ENCODE measurements at regions of chr1 and their contacts with region 1.

Region 1: DNA sequence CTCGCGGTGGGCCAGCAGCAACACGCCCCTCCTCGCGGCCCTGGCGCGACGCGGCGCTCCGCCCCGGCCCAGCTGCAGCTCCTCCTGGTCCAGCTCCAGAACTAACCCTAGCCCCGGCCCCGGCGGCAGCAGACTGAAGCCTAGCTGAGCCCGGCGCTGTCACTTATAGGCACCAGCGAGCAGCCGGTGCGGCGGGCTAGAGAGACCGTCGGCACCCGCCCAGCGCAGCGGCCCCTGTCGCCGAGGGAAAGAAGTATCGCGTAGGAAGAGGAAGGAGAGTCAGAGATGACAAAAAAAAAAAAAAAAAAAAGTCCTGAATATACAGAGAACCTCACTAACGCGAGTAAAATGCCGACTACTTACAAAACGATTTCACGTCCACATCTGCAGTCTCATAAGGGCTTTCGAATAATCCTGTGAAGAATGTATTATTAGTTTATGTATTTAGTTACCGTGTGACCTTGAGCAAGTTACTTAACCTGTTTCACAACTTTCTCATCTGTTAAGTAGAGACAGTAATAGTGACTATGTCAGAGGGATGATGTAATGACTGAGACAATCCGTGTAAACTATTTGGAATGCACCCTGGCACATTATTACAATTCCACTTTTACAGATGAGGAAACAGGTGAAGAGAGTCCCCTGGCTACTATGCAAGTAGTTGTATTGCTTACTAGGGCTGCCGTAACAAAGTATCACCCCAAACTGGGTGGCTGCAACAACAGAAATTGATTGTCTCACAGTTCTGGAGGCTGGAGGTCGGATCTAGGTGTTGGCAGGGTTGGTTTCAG is at the start of gene SLC9A1:
- DNase-seq: peak; percentile 91
- ATAC-seq: peak; percentile 94
- H3K4me3 Mint-ChIP-seq: peak within 1 kb of the TSS; percentile 79
- H3K27ac Mint-ChIP-seq: peak within 1 kb of the TSS; percentile 96
- H3K4me1 Mint-ChIP-seq: peaks cover 46% of the 10 kb centered on the region
- H3K27me3 Mint-ChIP-seq: no peaks in the 10 kb centered on the region
- CTCF ChIP-seq: peak; percentile 88
- total RNA-seq, gene SLC9A1: 14.8 to 15.3 TPM

Region 2: GRCh38 chr1:27111626-27112573 is 43.3 kb before region 1 on chr1:
- CTCF ChIA-PET with region 1: interaction called, 29 read pairs
- POLR2A ChIA-PET with region 1: interaction called, 12 read pairs
- intact Hi-C with region 1: loop called (anchors 5 kb)
- DNase-seq: peak; percentile 92
- ATAC-seq: peak; percentile 97
- H3K4me3 Mint-ChIP-seq: peak overlapping the region; percentile 49
- H3K27ac Mint-ChIP-seq: peak overlapping the region; percentile 90
- H3K4me1 Mint-ChIP-seq: peaks cover 55% of the 10 kb centered on the region
- H3K27me3 Mint-ChIP-seq: no peaks in the 10 kb centered on the region
- CTCF ChIP-seq: no peak

Region 3: DNA sequence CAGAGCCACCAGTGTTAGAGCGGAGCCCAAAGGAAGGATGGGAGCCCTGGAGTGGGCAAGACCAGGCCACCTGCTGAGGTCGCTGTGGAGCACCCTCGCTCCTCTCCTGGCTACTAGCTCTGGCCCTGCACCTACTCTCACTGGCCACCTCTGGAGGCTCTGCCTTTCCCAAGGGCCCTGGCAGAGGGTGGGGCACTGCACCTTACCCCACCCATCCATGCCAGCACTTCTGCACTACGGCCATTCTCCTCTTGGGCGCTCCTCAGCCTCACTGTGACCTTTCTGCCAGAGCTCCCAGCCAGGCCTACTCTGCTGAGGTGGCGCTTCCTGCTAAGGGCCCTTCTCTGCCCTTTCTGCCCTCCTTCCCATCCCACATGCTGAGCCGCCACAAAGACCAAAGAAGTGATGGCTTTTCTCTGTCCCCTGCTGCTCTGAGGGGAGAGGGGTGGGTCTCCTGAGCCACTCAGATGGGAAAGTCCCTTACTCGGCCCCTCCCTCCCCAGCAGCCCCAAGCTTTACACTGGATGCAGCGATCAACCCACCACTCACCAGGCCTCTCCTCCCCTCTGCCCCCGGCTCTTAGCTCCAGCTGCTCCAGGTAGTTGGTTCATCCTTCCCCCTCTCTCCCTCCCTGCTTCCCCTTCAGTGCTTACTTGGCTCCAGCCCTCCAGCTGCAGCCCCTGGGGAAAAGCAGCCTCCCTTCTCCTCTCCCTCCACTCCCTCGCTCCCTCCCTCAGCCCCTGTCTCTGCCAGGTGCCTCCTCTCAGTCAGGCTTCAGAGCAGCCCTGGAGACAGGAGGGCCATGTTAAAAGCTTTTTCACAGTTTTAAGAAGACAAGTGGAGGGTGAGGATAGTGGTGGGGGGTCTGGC is 151.9 kb after region 1 on chr1:
- CTCF ChIA-PET with region 1: no interaction called
- POLR2A ChIA-PET with region 1: no interaction called
- intact Hi-C with region 1: no loop called
- DNase-seq: no peak
- ATAC-seq: peak; percentile 27
- H3K4me3 Mint-ChIP-seq: no peak overlapping the region
- H3K27ac Mint-ChIP-seq: no peak overlapping the region
- H3K4me1 Mint-ChIP-seq: no peaks in the 10 kb centered on the region
- H3K27me3 Mint-ChIP-seq: no peaks in the 10 kb centered on the region
- CTCF ChIP-seq: no peak

Measured in activated CD8-positive, alpha-beta T cell treated with anti-CD3 and anti-CD28 coated beads for 36 hours (primary cell).